Calu3 (cell line): ENCODE measurements at regions of chr10 and their contacts with region 1.

Region 1: DNA sequence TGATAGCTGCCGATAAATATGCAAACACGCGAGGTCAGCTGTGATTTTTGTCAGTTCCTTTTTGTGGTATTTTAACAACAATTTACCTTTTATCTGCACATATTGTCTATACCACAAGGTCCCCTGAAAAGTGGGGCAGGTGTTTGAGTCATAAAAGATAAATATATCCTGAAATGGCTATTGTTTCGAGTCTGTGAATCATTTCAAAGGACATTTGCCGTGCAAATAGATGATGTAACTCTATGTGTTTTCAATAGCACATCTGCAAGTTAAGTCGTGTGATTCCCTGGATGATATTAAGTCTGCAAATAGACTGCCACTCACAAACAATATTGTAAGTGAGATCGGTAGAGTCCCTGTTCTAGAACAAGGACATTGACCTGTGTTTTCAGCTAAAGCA is 193.0 kb upstream of the PITRM1 start:
- DNase-seq: peak; percentile 28
- H3K4me3 Mint-ChIP-seq: peak overlapping the region; percentile 52
- H3K27ac Mint-ChIP-seq: peak overlapping the region; percentile 19
- H3K4me1 Mint-ChIP-seq: peaks cover 25% of the 10 kb centered on the region
- H3K27me3 Mint-ChIP-seq: no peaks in the 10 kb centered on the region
- CTCF ChIP-seq: no peak

Region 2: DNA sequence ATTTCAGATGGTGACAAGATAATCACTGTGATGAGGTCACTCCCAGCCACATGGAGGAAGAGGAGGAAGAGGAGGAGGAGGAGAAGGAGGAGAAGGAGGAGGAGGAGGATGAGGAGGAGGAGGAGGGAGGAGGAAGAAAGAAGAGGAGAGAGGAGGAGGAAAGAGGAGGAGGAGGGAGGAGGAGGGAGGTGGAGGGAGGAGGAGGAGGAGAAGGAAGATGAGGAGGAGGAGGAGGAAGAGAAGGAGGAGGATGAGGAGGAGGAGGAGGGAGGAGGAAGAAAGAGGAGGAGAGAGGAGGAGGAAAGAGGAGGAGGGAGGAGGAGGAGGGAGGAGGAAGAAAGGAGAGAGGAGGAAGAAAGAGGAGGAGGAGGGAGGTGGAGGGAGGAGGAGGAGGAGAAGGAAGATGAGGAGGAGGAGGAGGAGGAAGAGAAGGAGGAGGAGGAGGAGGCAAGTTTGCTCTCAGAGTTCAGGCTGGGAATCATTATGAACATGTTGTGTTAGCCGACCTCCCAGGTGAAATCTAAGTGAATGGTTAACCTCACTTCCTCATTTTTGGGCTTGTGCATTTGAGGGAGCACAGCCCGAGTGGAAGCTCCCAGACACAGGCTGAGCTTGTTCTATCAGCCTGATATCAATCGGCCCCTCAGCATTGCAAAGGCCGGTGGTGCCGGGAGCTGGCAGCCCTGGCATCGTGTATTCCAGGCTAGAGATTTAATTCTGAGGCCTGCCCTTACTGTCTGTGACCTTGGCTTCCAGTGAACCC is 43.2 kb after region 1 on chr10:
- CTCF ChIA-PET with region 1: no interaction called
- intact Hi-C with region 1: loop called (anchors 1 kb)
- DNase-seq: peak; percentile 38
- H3K4me3 Mint-ChIP-seq: no peak overlapping the region
- H3K27ac Mint-ChIP-seq: no peak overlapping the region
- H3K4me1 Mint-ChIP-seq: peaks cover 7% of the 10 kb centered on the region
- H3K27me3 Mint-ChIP-seq: no peaks in the 10 kb centered on the region
- CTCF ChIP-seq: no peak